Dorsolateral prefrontal cortex (tissue), 120 donors: ENCODE measurements at regions of chr1 and their contacts with region 1.

Region 1: DNA sequence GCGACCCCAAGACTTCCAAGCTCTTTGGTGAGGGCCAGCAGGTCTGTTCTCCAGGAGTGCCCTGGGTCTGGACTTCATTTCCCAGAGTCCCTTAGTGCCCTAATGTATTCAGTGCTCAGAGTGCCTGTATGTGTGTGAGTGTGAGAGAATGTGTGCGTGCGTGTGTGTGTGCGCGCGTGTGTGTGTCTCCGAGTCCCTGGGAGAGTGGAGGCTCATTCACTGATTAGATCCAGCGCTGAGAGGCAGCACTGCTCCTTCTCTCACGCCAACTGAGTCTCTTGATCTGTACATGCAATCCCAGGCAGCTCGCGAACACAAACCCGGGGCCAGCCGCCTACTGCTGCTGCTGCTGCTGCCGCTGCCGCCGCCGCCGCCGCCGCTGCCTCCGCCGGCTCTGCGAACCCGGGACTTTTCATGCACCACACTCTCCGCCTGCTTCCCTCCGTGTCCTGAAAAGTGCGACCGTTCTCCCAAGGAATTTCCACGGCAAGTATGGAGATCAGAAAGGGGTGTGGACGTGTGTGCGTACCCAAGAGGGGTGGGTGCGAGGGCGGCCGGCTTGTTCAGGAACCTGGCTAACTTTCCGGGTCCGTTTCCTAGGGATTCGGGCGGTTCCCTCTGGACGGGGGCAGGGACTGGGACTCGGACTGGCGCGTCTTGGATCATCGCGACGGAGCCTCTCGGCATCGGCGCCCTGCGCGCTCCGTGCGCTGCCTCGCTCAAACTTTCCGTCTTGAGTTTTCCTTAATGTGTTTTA is at the start of gene RNF220:
- DNase-seq: peak; percentile 41 to 97 (median 92)
- H3K4me3 ChIP-seq: peak within 1 kb of the TSS; percentile 35 to 86 (median 69)
- H3K27ac ChIP-seq: peak within 1 kb of the TSS; percentile 63 to 97 (median 92)
- H3K27me3 ChIP-seq: peaks cover 0 to 63% (median 40%) of the 10 kb centered on the region in 45 donors
- CTCF ChIP-seq: peak in 48 of 56 donors; percentile 0 to 55 (median 36)
- total RNA-seq, gene RNF220: 104 to 415 (median 196) TPM

Region 2: DNA sequence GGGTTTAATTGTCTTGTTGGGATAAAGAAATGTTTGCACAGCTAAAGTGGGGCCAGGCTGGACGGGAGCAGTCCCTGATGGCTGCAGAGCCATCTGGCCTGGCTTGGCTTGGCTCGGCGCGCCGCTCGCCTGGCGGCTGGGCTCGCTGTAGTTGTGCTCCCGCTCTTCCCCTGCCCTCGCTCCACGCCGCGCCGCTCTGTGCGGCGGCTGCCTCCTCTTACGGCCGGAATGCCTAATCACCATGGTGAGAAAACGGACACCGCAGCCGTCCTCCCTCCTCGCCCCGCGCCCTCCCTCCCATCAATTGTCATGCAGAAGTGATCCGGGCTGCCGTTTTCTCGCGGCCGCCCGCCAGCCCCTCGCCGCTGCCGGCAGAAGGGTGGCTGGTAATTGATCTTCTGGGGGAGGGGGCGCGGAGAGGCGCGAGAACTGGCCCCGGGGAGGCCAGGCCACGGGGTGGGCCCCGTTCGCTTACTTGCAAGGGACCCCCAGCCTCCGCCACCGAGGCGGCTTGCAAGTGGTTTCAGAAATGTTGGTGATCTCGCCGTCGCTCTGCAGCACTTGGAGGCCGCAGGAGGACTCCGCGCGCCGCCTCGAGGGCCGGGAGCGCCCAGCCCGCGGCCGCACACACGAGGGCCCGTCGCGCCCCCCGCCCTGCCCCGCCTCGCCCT is 12.3 kb after region 1 on chr1:
- intact Hi-C with region 1: loop called in 1 of 2 experiments (anchors 1 kb)
- DNase-seq: peak; percentile 68 to 78 (median 72)
- H3K4me3 ChIP-seq: peak overlapping the region; percentile 12 to 66 (median 48)
- H3K27ac ChIP-seq: peak overlapping the region in 58 of 59 donors; percentile 46 to 97 (median 85)
- H3K27me3 ChIP-seq: peaks cover 0 to 86% (median 36%) of the 10 kb centered on the region in 45 donors
- CTCF ChIP-seq: peak in 15 of 56 donors; percentile 11 to 49 (median 25)

Region 3: GRCh38 chr1:44645476-44646244 is 240.4 kb after region 1 on chr1:
- intact Hi-C with region 1: loop called (anchors 5 to 10 kb)
- DNase-seq: peak; percentile 49 to 93 (median 91)
- H3K4me3 ChIP-seq: peak overlapping the region in 10 of 59 donors; percentile 2 to 32 (median 12)
- H3K27ac ChIP-seq: peak overlapping the region; percentile 62 to 94 (median 88)
- H3K27me3 ChIP-seq: no peaks in the 10 kb centered on the region
- CTCF ChIP-seq: peak in 40 of 56 donors; percentile 9 to 61 (median 36)